Body of pancreas (tissue), 4 donors: ENCODE measurements at regions of chr9 and their contacts with region 1.

Region 1: DNA sequence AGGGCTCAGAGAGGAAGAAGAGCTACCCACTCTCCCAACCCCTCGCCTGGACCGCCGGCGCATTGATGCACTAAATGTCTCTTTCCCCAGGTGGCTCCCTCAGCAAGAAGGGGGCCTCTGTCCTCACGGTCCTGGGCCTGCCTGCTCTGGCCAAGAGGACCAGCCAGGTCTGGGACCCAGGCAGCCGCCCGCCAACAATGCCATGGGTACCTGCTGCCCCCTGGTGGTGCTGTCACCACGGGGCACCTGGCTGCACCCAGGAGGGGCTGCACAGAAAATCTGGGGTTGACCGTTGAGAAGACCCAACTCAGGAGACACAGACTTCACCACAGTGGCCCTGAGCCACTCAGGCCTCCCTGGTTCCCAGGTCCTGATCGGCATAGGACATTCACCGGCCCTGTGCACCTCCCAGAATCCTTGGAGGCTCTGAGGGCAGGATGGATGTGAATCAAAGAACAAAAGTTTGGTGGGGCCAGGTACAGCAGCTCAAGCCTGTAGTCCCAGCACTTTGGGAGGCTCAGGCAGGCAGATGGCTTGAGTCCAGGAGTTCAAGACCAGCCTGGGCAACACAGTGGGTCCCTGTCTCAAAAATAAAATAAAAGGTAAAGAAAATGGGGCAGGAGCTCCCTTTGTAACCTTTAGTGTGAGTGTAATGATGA is 2.4 kb upstream of the VAV2 start:
- DNase-seq: peak; percentile 75 to 85 (median 82)
- ATAC-seq: peak; percentile 31
- H3K4me3 ChIP-seq: no peak overlapping the region
- H3K27ac ChIP-seq: no peak overlapping the region
- H3K4me1 ChIP-seq: peaks cover 33% of the 10 kb centered on the region
- H3K27me3 ChIP-seq: no peaks in the 10 kb centered on the region
- CTCF ChIP-seq: peak; percentile 94 to 99 (median 97)
- POLR2A ChIP-seq: no peak

Region 2: GRCh38 chr9:133792721-133793470 is 201.6 kb before region 1 on chr9:
- intact Hi-C with region 1: loop called (anchors 5 kb)
- DNase-seq: peak; percentile 69 to 80 (median 74)
- ATAC-seq: peak; percentile 78
- H3K4me3 ChIP-seq: no peak overlapping the region
- H3K27ac ChIP-seq: peak overlapping the region in 2 of 4 donors; percentile 25 to 34
- H3K4me1 ChIP-seq: peaks cover 9% of the 10 kb centered on the region
- H3K27me3 ChIP-seq: no peaks in the 10 kb centered on the region
- CTCF ChIP-seq: peak; percentile 79 to 92 (median 81)
- POLR2A ChIP-seq: no peak

Region 3: DNA sequence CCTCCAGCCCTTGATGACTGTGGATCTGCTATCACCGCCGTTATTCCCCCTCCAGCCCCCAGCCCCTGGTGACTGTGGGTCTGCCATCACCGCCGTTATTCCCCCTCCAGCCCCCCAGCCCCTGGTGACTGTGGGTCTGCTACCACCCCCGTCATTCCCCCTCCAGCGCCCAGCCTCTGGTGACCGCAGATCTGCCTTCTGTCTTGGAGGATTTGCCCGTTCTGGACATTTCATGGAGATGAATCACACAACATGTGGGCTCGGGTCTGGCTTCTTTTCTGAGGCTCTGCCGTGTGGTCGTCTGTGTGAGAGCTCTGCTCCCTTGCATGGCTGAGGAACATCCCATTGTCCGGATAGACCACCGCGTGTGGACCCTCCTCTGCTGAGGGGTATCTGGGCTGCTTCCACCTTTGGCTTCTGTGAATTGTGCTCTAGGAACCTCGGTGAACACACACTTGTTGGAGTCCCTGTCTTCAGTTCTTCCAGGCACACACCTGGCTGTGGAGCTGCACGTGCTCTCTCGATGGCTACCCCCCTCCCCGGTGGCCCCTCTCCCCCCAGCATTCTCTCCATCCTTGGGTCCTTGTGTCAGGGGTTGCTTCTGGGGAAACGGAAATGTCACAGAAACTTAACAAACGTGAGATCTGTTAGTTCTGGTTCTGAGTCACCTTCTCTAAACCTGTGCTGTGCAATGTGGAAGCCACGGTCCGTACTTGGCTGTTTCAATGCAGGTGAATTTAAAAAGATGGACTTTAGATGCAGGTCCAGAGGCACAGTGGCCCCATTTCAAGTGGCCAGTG is 541.8 kb after region 1 on chr9:
- intact Hi-C with region 1: no loop called
- DNase-seq: no peak
- ATAC-seq: no peak
- H3K4me3 ChIP-seq: no peak overlapping the region
- H3K27ac ChIP-seq: no peak overlapping the region
- H3K4me1 ChIP-seq: no peaks in the 10 kb centered on the region
- H3K27me3 ChIP-seq: no peaks in the 10 kb centered on the region
- CTCF ChIP-seq: no peak
- POLR2A ChIP-seq: no peak